ENCODE measurements at regions of chr4 and their contacts with region 1.

Region 1: DNA sequence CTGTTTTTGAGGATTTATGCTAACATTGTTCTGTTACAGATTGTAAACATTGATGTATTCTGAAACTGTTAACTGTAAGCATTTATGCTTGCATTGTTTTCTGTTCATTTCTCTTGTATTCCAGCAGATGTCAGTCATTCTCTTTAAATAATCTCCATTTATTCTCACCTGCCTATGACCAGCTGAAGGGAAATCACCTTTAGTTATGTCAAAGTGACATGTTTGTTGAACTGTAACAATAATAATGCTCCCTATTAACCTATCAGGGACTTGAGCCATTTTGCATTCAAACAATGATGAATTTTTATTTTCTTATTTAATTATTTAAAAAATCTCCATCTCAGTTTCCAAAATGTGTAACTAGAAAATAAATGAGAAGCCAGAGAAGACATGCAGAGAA is 58.0 kb downstream of the SPCS3 start:
- DNase-seq: no peak
- H3K4me3 ChIP-seq: no peak overlapping the region
- CTCF ChIP-seq: peak; percentile 39

Region 2: GRCh38 chr4:176664964-176665363 is 287.2 kb after region 1 on chr4:
- CTCF ChIA-PET with region 1: interaction called, 12 read pairs
- POLR2A ChIA-PET with region 1: no interaction called
- DNase-seq: no peak
- H3K4me3 ChIP-seq: no peak overlapping the region
- CTCF ChIP-seq: no peak

Region 3: GRCh38 chr4:176675810-176676209 is 298.0 kb after region 1 on chr4:
- CTCF ChIA-PET with region 1: interaction called, 23 read pairs
- POLR2A ChIA-PET with region 1: no interaction called
- DNase-seq: no peak
- H3K4me3 ChIP-seq: no peak overlapping the region
- CTCF ChIP-seq: no peak

Region 4: DNA sequence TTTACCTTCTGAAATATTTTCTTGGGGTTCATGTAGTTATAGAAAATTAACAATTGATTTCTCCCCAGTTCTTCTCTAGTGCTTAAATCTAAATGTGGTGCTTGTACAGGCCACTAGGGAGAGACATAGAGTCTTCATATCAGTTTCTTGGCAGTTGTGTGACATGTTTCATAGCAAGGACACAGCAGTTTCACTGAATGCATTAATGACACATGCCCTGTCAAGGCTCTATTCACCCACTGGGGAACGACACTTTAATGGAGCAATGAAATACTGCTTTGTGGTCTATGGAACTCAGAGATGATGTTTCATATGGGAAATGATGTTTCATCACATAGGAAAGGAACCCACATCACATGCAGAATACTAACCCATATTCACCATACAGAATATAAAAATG is 412.2 kb after region 1 on chr4:
- CTCF ChIA-PET with region 1: interaction called, 21 read pairs
- POLR2A ChIA-PET with region 1: no interaction called
- DNase-seq: no peak
- H3K4me3 ChIP-seq: peak overlapping the region; percentile 78
- CTCF ChIP-seq: peak; percentile 59

Region 5: DNA sequence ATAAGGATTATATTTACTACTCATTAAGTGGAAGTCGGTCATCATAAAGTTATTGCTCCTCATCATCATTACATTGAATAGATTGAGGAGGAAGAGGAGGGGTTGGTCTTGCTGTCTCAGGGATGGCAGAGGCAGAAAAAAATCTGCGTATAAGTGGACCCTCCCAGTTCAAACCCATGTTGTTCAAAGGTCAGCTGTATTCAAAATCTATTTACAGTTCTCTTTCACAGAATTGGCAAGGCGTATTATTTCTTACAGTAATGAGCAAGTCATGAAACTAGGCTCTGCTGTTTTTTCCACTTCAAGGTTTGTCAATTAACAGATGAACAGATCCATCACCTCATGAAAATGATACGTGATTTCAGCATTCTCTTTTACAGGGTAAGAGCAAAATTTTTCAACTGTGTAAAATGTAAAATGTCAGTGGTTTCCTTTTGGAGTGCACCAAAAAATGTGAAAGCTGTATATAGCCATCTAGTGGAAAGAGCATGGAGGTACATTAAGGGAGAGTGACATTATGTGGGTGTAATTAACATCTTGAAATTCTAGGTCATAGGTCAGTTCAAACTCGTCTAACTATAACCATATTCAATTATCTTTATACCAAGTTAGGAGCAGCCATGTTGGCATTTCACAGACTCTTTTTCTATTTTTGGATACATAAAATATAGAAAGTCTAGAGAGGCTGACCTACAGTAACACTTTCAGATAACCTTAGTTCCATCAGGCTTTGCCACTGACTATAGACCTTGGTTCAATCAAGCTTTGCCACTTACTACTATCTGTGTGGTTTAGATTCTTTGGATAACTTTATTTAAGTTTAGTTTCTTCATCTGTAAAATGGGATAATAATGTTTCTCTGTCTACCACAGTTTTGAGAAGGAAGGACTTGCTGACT is 961.9 kb after region 1 on chr4:
- CTCF ChIA-PET with region 1: interaction called, 14 read pairs
- POLR2A ChIA-PET with region 1: no interaction called
- DNase-seq: peak; percentile 10
- H3K4me3 ChIP-seq: no peak overlapping the region
- CTCF ChIP-seq: peak; percentile 53

Measured in AG04449 (cell line).